MCF 10A (cell line): ENCODE measurements at regions of chr3 and their contacts with region 1.

Region 1: GRCh38 chr3:149129326-149130205 is at the start of gene HPS3:
- DNase-seq: peak; percentile 88
- H3K4me3 Mint-ChIP-seq: peak within 1 kb of the TSS; percentile 93
- H3K27ac Mint-ChIP-seq: peak within 1 kb of the TSS; percentile 75
- H3K4me1 Mint-ChIP-seq: peaks cover 28% of the 10 kb centered on the region
- H3K27me3 Mint-ChIP-seq: no peaks in the 10 kb centered on the region
- CTCF ChIP-seq: no peak
- total RNA-seq, gene HPS3: 7.7 and 11.1 TPM in 2 replicates

Region 2: DNA sequence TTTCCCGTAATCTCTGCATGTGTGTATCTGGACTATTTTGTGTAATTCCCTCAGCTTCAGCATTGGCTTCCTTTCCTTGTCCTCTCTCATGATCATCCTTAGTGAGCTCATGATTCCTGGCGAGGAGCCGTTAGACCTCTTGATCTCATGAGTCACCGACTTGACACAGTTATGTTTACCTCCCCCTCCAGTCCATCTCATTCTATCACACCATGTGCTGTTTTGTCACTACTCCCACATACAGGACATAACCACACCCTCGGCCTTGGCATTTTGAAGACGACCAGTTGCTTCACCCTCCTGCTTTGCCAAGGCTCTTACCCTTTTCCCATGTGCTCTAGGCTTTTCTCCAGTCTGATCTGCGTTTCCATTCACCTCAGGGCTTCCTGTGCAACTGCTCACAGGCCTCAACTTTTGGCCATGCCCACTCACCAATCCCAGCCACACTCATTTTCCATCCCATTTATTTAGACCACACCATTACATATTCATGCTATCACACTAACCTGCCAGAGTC is 50.5 kb after region 1 on chr3:
- CTCF ChIA-PET with region 1: interaction called, 4 read pairs
- POLR2A ChIA-PET with region 1: interaction called, 38 read pairs
- intact Hi-C with region 1: no loop called
- DNase-seq: peak; percentile 100
- H3K4me3 Mint-ChIP-seq: no peak overlapping the region
- H3K27ac Mint-ChIP-seq: no peak overlapping the region
- H3K4me1 Mint-ChIP-seq: peaks cover 6% of the 10 kb centered on the region
- H3K27me3 Mint-ChIP-seq: no peaks in the 10 kb centered on the region
- CTCF ChIP-seq: no peak

Region 3: GRCh38 chr3:149267565-149267964 is 138.0 kb after region 1 on chr3:
- CTCF ChIA-PET with region 1: interaction called, 12 read pairs
- POLR2A ChIA-PET with region 1: interaction called, 9 read pairs
- intact Hi-C with region 1: loop called (anchors 2 kb)
- DNase-seq: no peak
- H3K4me3 Mint-ChIP-seq: no peak overlapping the region
- H3K27ac Mint-ChIP-seq: no peak overlapping the region
- H3K4me1 Mint-ChIP-seq: peaks cover 5% of the 10 kb centered on the region
- H3K27me3 Mint-ChIP-seq: no peaks in the 10 kb centered on the region
- CTCF ChIP-seq: no peak